ENCODE measurements at regions of chr19 and their contacts with region 1.

Region 1: DNA sequence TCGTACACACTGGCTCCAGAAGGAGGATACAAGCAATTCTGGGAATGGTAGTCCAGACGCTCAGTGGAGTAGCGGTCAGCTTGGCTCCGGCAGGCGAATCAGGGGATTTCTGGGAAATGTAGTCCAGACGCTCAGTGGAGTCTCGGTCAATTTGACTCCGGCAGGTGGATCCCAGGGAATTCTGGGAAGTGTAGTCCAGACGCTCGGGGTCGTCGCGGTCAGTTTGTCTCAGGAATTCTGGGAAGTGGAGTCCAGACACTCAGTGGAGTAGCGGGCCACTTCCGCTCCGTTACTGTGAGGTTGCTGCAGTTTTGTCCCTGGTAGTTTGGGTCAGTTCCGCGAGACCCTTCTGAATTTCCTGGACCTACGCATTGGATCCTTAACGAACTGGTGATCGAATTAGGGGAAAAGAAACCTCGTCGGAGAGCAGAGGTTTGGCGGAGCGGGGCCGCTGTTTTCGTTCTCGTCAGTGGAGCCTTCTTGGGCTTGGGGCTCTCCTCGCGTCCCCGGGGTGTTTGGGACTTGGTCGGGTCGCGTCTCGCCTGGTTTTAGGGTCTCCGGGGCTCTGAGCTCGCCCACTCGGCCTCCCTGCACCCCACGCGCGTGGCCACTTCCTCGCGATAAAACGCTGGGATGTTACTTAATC is at the start of gene ZNF225:
- DNase-seq: peak; percentile 88
- ATAC-seq: peak; percentile 94
- H3K4me3 Mint-ChIP-seq: peak within 1 kb of the TSS; percentile 99
- H3K27ac Mint-ChIP-seq: peak within 1 kb of the TSS; percentile 93
- H3K4me1 Mint-ChIP-seq: peaks cover 19% of the 10 kb centered on the region
- H3K27me3 Mint-ChIP-seq: no peaks in the 10 kb centered on the region
- total RNA-seq, gene ZNF225: 2.6 to 3.1 TPM

Region 2: DNA sequence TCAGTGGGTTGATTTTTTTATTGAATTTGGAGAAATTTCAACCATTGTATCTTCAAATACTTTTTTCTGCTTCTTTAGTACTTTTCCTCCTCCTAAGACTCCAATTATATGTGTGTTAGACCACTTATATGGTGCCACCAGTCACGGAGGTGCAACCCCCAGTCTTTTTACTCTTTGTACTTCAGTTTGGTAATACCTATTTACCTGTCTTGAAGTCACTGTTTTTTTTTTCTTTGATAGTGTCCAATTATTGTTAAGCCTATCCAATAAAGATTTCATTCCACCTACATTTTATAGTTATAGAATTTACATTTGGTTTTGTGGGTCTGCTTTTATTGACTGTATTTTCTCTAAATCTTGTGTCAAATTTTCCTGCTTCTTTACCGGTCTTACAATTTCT is 271.3 kb before region 1 on chr19:
- CTCF ChIA-PET with region 1: no interaction called
- POLR2A ChIA-PET with region 1: no interaction called
- intact Hi-C with region 1: no loop called
- DNase-seq: no peak
- ATAC-seq: no peak
- H3K4me3 Mint-ChIP-seq: no peak overlapping the region
- H3K27ac Mint-ChIP-seq: no peak overlapping the region
- H3K4me1 Mint-ChIP-seq: no peaks in the 10 kb centered on the region
- H3K27me3 Mint-ChIP-seq: no peaks in the 10 kb centered on the region

Region 3: DNA sequence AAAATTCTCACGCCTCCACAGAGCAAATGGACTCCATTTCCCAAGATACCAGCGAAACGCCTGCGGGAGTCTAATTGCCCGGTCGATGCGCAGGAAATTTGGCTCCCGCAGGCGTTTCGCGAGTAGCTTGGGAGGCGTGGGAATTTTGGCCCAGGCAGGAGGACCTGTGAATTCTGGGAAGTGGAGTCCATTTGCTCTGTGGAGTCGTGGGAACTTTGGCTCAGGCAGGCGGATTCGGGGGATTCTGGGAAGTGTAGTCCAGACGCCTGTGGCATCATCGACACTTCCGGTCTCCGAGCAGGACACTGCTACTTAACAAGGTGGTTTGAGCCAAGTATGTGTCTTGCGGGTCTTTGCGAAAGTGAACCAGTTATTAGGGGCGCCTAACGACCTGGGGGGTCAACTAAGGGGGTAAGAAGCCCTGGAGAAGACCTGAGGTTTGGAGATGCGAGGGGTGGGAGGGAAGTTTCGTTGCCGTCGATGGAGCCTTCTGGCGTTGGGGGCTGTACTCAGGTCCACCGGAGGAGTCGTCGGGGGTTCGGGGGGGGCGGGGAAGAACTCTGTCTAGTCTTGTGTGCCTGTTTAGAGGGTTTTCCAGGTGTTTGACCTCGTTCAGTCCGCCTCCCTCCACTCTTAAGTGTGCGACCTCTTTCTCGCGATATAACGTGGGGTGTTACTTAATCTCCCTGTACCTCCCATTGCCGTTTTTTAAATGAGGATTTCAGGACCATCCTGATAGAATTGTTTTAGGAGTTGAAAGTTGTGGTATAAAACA is 129.2 kb before region 1 on chr19 and contains the start of gene ZNF155:
- CTCF ChIA-PET with region 1: no interaction called
- POLR2A ChIA-PET with region 1: no interaction called
- intact Hi-C with region 1: loop called in 1 of 2 experiments (anchors 1 kb)
- DNase-seq: peak; percentile 82
- ATAC-seq: peak; percentile 97
- H3K4me3 Mint-ChIP-seq: peak within 1 kb of the TSS; percentile 90
- H3K27ac Mint-ChIP-seq: peak within 1 kb of the TSS; percentile 92
- H3K4me1 Mint-ChIP-seq: peaks cover 11% of the 10 kb centered on the region
- H3K27me3 Mint-ChIP-seq: no peaks in the 10 kb centered on the region
- total RNA-seq, gene ZNF155: 4.5 to 6.0 TPM

Region 4: GRCh38 chr19:44141191-44142058 is 28.2 kb after region 1 on chr19 and contains the start of gene ZNF234:
- CTCF ChIA-PET with region 1: interaction called, 3 read pairs
- POLR2A ChIA-PET with region 1: no interaction called
- intact Hi-C with region 1: loop called in 1 of 2 experiments (anchors 1 kb)
- DNase-seq: peak; percentile 82
- ATAC-seq: peak; percentile 92
- H3K4me3 Mint-ChIP-seq: peak within 1 kb of the TSS; percentile 92
- H3K27ac Mint-ChIP-seq: peak within 1 kb of the TSS; percentile 94
- H3K4me1 Mint-ChIP-seq: peaks cover 12% of the 10 kb centered on the region
- H3K27me3 Mint-ChIP-seq: no peaks in the 10 kb centered on the region
- total RNA-seq, gene ZNF234: 7.9 to 10.4 TPM

Region 5: GRCh38 chr19:44207126-44207803 is 94.0 kb after region 1 on chr19:
- CTCF ChIA-PET with region 1: no interaction called
- POLR2A ChIA-PET with region 1: no interaction called
- intact Hi-C with region 1: loop called (anchors 1 to 2 kb)
- DNase-seq: peak; percentile 84
- ATAC-seq: peak; percentile 93
- H3K4me3 Mint-ChIP-seq: peak overlapping the region; percentile 80
- H3K27ac Mint-ChIP-seq: peak overlapping the region; percentile 73
- H3K4me1 Mint-ChIP-seq: peaks cover 4% of the 10 kb centered on the region
- H3K27me3 Mint-ChIP-seq: peaks cover 2% of the 10 kb centered on the region

Region 6: DNA sequence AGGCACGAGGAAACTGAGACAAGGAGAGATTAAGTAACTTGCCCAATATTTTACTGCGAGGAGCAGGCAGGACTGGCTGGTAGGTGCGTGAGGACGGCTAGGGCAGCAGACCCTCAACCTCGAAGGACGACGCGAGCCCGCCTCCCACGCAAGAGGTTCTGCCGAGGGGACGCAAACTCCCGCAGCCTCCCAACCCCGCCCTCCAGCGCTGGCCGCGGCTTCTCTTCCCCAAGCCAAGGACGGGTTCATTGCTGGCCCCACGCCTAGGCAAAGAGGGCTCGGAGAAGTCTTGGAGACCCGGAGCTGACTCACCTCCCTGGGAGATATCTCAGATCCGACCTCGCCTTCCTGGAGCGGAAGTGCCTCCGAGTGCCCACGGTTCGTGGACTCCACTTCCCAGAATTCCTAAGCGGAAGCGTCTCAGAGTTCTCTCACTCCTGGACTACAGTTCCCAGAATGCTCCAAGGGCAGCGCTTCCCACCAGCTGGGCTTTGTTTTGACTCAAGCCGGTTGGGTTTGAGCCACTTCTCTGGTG is 191.5 kb after region 1 on chr19 and contains the start of gene ZNF235:
- CTCF ChIA-PET with region 1: no interaction called
- POLR2A ChIA-PET with region 1: no interaction called
- intact Hi-C with region 1: loop called (anchors 1 to 2 kb)
- DNase-seq: peak; percentile 87
- ATAC-seq: peak; percentile 97
- H3K4me3 Mint-ChIP-seq: peak within 1 kb of the TSS; percentile 83
- H3K27ac Mint-ChIP-seq: peak within 1 kb of the TSS; percentile 64
- H3K4me1 Mint-ChIP-seq: peaks cover 12% of the 10 kb centered on the region
- H3K27me3 Mint-ChIP-seq: no peaks in the 10 kb centered on the region
- total RNA-seq, gene ZNF235: 2.1 to 2.7 TPM

Region 7: GRCh38 chr19:44447916-44448674 is 334.8 kb after region 1 on chr19 and contains the start of gene ZNF229:
- CTCF ChIA-PET with region 1: no interaction called
- POLR2A ChIA-PET with region 1: no interaction called
- intact Hi-C with region 1: loop called in 1 of 2 experiments (anchors 5 kb)
- DNase-seq: peak; percentile 91
- ATAC-seq: peak; percentile 98
- H3K4me3 Mint-ChIP-seq: peak within 1 kb of the TSS; percentile 81
- H3K27ac Mint-ChIP-seq: peak within 1 kb of the TSS; percentile 84
- H3K4me1 Mint-ChIP-seq: peaks cover 10% of the 10 kb centered on the region
- H3K27me3 Mint-ChIP-seq: peaks cover 2% of the 10 kb centered on the region
- total RNA-seq, gene ZNF229: 1.0 to 1.2 TPM

Measured in activated CD4-positive, alpha-beta T cell treated with anti-CD3 and anti-CD28 coated beads for 36 hours (primary cell).